A673 (cell line): ENCODE measurements at regions of chr22 and their contacts with region 1.

Region 1: DNA sequence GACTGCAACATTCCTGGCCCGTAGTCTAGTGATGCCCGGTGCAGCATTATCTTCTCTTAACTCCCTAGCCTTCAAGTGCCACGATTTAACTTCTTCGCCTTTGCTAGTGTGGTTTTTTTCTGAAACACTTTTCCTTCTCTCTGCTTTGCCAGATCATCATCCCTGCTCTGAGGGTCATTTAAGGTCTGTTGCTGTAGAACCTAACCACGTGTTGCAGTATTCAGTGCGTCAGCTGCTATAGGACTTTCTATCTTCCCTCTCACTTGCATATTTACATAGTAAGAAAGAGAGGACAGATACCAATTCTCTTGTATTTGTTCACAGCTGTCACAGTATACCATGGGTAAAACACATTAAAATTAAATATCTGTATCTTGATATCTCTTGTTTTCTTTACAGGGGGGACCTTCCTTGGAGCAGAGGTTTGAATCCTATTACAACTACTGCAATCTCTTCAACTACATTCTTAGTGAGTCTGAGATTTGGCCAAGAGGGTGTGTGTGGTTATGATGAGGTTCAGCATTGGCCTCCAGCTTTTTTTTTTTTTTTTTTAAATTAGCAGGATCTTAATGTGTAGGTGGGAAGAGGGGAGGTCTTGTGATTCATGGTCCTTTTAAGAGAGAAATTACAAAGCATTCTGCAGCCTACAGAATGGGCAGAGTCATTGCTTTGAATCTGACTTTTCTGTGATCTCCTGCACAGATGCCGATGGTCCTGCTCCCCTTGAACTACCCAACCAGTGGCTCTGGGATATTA is 13.5 kb downstream of the EIF3L start:
- DNase-seq: no peak
- H3K4me3 ChIP-seq: no peak overlapping the region
- H3K27ac ChIP-seq: no peak overlapping the region
- H3K4me1 ChIP-seq: no peaks in the 10 kb centered on the region
- H3K27me3 ChIP-seq: no peaks in the 10 kb centered on the region
- CTCF ChIP-seq: no peak

Region 2: GRCh38 chr22:36301384-36301828 is 1561.3 kb before region 1 on chr22:
- CTCF ChIA-PET with region 1: no interaction called
- POLR2A ChIA-PET with region 1: interaction called, 11 read pairs
- intact Hi-C with region 1: no loop called
- DNase-seq: peak; percentile 70
- H3K4me3 ChIP-seq: no peak overlapping the region
- H3K27ac ChIP-seq: no peak overlapping the region
- H3K4me1 ChIP-seq: no peaks in the 10 kb centered on the region
- H3K27me3 ChIP-seq: no peaks in the 10 kb centered on the region
- CTCF ChIP-seq: peak; percentile 94

Region 3: DNA sequence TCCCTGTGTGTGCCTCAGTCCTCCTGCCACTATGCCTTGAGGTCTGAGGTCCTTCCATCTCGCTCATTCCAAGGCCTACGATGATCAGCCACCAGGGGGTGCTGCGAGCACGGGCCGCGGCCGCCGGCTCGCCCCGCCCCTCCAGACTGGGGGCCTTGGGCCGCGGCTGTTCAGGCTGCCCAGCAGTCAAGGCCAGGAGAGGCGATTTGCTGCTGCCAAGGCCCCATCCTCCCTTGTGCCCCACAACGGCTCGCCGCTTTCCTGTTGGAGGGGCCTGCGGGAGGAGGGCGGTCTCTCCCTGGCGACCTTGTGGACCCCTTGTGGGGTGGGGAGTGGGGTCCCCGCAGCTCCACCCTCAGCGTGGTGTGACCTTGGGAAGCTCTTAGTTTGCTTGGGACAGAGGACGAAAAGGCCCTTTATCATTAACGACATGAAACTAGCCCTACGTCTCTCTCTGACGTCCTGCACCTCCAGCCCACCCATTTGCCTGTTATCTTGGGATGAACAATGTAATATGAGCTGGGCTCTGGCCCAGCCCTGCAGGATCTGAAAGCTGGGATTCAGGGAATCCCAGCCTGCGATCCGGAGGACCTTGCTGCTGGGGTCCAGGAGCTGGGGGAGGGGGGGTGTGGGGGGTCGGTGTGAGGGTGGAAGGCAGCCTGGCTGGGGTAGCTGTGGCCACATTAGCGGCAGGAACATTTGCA is 44.9 kb before region 1 on chr22:
- CTCF ChIA-PET with region 1: interaction called, 13 read pairs
- POLR2A ChIA-PET with region 1: no interaction called
- intact Hi-C with region 1: loop called (anchors 5 kb)
- DNase-seq: peak; percentile 81
- H3K4me3 ChIP-seq: peak overlapping the region; percentile 34
- H3K27ac ChIP-seq: peak overlapping the region; percentile 38
- H3K4me1 ChIP-seq: peaks cover 15% of the 10 kb centered on the region
- H3K27me3 ChIP-seq: no peaks in the 10 kb centered on the region
- CTCF ChIP-seq: peak; percentile 90

Region 4: GRCh38 chr22:37849089-37849751 is 13.5 kb before region 1 on chr22 and contains the start of gene EIF3L:
- CTCF ChIA-PET with region 1: no interaction called
- POLR2A ChIA-PET with region 1: interaction called, 12 read pairs
- intact Hi-C with region 1: no loop called
- DNase-seq: peak; percentile 94
- H3K4me3 ChIP-seq: peak within 1 kb of the TSS; percentile 86
- H3K27ac ChIP-seq: peak within 1 kb of the TSS; percentile 82
- H3K4me1 ChIP-seq: peaks cover 9% of the 10 kb centered on the region
- H3K27me3 ChIP-seq: no peaks in the 10 kb centered on the region
- CTCF ChIP-seq: no peak
- total RNA-seq, gene EIF3L: 492 and 528 TPM in 2 replicates

Region 5: GRCh38 chr22:37880668-37881440 is 18.1 kb after region 1 on chr22:
- CTCF ChIA-PET with region 1: interaction called, 13 read pairs
- POLR2A ChIA-PET with region 1: no interaction called
- intact Hi-C with region 1: no loop called
- DNase-seq: peak; percentile 57
- H3K4me3 ChIP-seq: no peak overlapping the region
- H3K27ac ChIP-seq: no peak overlapping the region
- H3K4me1 ChIP-seq: peaks cover 3% of the 10 kb centered on the region
- H3K27me3 ChIP-seq: no peaks in the 10 kb centered on the region
- CTCF ChIP-seq: no peak

Region 6: GRCh38 chr22:38135133-38135751 is 272.5 kb after region 1 on chr22:
- CTCF ChIA-PET with region 1: no interaction called
- POLR2A ChIA-PET with region 1: no interaction called
- intact Hi-C with region 1: no loop called
- DNase-seq: no peak
- H3K4me3 ChIP-seq: no peak overlapping the region
- H3K27ac ChIP-seq: no peak overlapping the region
- H3K4me1 ChIP-seq: no peaks in the 10 kb centered on the region
- H3K27me3 ChIP-seq: no peaks in the 10 kb centered on the region
- CTCF ChIP-seq: no peak